ENCODE measurements at regions of chr2 and their contacts with region 1.

Region 1: DNA sequence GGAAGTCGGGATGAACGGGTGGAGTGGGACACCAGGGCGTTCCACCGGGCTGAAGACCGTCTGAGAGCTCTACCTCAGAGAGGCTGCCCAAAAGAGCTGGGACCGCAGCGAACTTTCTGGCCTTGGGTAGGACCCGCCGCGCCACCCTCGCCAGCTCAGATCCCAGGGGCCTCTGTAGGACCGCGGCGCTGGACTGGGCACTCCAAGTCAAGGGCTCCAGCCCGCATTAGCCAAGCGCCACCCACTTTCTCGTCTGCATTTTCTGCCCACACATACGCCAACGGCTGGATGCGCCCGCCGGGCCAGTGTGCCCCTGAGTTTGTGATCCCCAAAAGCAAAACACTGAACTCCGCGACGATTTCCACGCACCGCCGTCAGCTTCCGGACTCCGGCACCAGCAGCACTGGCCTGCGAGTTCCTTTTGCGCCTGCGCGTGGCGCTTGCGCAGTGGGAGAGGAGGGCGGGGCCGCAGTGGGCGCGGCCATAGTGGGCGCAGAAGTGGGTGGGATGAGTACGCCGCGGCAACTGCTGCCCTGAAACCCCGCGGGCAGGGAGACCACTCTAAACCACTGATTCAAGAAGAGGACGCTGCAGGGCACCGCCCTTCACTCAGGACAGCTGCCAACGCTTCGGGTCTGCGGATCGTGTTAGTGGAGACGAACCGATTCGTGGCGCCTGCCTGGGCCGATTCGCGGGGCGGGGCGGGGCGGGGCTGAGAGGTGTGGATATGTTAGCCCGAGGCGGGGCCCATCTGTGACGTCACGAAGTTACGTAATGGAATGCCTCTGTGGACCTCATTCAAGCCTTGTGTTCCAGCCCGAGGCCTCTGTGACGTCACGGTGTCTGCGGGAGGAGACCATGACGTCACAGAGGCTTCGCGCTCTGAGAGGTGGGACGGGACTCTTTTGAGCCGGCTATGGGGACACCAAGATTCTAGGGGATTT is 10.5 kb downstream of the OSR1 start:
- DNase-seq: peak; percentile 97 to 99
- H3K4me3 ChIP-seq: peak overlapping the region; percentile 81 to 87
- H3K27ac ChIP-seq: peak overlapping the region; percentile 96
- H3K4me1 ChIP-seq: peaks cover 13 to 44% of the 10 kb centered on the region in 2 donors
- H3K27me3 ChIP-seq: no peaks in the 10 kb centered on the region
- CTCF ChIP-seq: no peak

Region 2: GRCh38 chr2:18435421-18436037 is 912.4 kb before region 1 on chr2:
- intact Hi-C with region 1: loop called (anchors 5 kb)
- DNase-seq: no peak
- H3K4me3 ChIP-seq: no peak overlapping the region
- H3K27ac ChIP-seq: no peak overlapping the region
- H3K4me1 ChIP-seq: peaks cover 0 to 10% of the 10 kb centered on the region in 2 donors
- H3K27me3 ChIP-seq: no peaks in the 10 kb centered on the region
- CTCF ChIP-seq: peak in 2 of 3 experiments; percentile 42 to 68

Region 3: DNA sequence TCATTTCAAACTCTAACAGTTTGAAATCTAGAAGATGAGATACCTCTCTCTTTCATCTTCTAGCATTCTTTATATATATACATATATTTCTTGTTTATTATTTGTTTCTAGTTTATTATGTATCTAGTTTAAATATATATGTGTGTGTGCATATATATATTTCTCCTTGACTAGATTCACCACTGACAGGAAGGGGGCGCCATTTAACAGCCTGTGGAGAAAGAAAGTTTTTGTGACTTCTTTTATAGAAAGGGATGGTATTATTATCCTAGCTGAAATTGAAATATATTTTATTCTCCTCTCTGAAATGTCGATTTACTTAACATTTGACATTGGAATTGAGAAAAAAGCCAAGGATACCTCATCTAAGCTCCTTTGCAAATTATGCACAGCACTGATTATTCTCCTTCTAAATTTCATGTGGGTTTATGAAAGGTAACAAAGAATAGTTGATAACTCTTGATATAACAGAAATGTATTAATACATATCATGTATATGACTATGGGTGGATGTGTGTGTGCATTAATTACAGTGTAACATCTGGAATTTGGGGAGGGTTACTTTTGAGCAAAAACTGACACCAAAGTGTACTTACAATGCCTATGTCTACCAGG is 597.9 kb before region 1 on chr2:
- intact Hi-C with region 1: loop called (anchors 2 kb)
- DNase-seq: peak in 1 of 2 donors; percentile 71
- H3K4me3 ChIP-seq: no peak overlapping the region
- H3K27ac ChIP-seq: no peak overlapping the region
- H3K4me1 ChIP-seq: no peaks in the 10 kb centered on the region
- H3K27me3 ChIP-seq: no peaks in the 10 kb centered on the region
- CTCF ChIP-seq: peak; percentile 52 to 83 (median 79)

Region 4: DNA sequence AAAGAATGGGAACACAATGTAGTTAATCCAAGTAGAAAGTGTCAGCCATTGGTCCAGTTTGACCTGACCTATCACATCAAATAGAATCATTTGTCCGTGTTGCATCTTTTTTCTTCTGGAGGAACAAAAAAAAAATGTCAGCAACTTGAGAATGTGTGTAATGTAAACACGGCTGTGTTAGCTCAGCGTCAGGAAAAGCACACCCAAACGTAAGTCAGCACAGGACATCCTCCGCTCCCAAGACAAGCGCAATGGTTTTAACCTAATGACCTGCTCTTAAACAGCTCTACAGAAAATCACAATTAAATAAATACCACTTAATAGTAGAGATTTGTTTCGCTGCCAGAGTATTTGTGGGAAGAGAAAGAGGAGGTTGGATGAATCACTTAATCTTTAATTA is 48.9 kb before region 1 on chr2:
- intact Hi-C with region 1: no loop called
- DNase-seq: no peak
- H3K4me3 ChIP-seq: no peak overlapping the region
- H3K27ac ChIP-seq: no peak overlapping the region
- H3K4me1 ChIP-seq: no peaks in the 10 kb centered on the region
- H3K27me3 ChIP-seq: no peaks in the 10 kb centered on the region
- CTCF ChIP-seq: no peak

Region 5: GRCh38 chr2:19685731-19686130 is 337.8 kb after region 1 on chr2:
- intact Hi-C with region 1: loop called (anchors 5 kb)
- DNase-seq: no peak
- H3K4me3 ChIP-seq: no peak overlapping the region
- H3K27ac ChIP-seq: peak overlapping the region in 1 of 2 donors; percentile 22
- H3K4me1 ChIP-seq: peaks cover 4 to 17% of the 10 kb centered on the region in 2 donors
- H3K27me3 ChIP-seq: no peaks in the 10 kb centered on the region
- CTCF ChIP-seq: no peak

Region 6: DNA sequence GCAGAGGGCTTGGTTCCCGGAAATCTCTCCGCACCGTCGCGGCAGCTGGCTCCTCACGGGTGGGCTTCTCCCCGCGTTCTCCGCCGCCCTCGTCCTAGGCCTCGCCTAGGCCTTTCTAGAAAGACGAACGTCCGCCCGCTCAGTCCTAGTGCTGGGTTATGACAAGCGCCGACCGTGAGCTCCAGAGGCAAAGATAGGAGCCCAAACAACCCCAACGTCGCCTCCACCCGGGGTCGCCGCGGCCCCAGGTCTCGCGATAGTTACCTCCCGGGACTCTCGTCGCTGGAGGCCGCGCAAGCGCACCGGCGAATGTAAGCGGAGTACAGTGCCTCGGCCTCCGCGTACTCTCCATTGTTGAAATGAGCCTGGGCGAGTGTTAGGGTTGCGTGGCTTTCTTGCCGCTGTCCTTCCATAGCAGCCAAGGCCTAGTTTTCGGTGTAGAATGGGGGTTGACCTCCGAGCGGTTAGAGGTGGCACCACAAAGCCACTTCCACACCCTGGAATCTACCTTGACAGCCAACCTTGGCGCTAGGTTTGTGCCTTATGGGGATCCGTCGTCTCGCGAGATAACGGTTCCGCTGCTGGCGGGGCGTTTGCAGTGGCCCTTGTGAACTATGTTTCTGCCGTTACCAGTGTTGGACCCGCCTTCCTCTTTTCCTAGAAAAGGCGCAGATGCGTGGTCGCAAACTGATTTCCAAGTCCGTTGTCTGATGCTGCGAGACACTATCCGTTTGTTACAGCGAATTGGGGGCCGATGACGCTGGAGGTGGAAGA is 553.7 kb after region 1 on chr2 and contains the start of gene TTC32:
- intact Hi-C with region 1: loop called (anchors 5 kb)
- DNase-seq: peak; percentile 70 to 96
- H3K4me3 ChIP-seq: peak within 1 kb of the TSS; percentile 79 to 91
- H3K27ac ChIP-seq: peak within 1 kb of the TSS; percentile 84 to 91
- H3K4me1 ChIP-seq: peaks cover 0 to 28% of the 10 kb centered on the region in 2 donors
- H3K27me3 ChIP-seq: no peaks in the 10 kb centered on the region
- CTCF ChIP-seq: no peak
- total RNA-seq, gene TTC32: not detected